Dorsolateral prefrontal cortex (tissue), 120 donors: ENCODE measurements at regions of chr10 and their contacts with region 1.

Region 1: DNA sequence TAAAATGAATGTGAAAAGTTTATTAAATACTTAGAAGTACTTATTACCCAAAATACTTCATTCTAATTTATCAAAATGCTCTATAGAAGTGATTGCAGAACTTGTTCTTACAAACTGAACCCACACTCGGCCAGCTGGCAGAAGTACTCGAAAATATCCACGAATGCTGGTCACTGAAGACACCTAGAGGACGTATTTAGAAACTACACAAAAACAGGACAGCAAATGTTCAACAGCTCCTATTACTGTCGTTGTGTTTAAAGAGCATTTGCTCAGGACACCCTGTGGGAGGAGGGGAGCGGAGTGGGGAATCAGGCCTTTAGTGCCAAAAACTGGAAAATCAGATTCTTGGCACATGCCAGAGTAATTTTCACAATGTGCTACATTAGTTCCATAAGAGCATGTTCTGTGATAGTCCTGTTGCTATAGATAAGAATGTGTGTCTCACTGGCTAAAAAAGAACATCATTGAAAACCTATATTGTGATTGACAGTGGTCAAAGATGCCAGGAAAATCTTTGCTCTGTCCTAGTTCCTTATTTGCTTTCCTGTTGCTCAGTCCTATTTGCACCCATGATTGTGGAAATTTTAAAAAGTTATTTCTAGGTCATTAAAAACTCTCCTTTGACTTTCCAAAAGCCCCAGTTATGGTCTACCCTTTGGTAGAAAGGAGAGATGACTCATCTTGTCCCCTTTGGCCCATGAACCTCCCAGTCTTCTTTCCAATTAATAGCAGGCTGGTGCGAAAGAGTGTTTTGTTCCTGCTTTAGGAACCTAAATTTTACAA is 49.0 kb upstream of the NRBF2 start:
- DNase-seq: peak in 7 of 10 donors; percentile 6 to 77 (median 55)
- H3K4me3 ChIP-seq: no peak overlapping the region
- H3K27ac ChIP-seq: no peak overlapping the region
- H3K27me3 ChIP-seq: no peaks in the 10 kb centered on the region
- CTCF ChIP-seq: peak; percentile 22 to 93 (median 78)

Region 2: DNA sequence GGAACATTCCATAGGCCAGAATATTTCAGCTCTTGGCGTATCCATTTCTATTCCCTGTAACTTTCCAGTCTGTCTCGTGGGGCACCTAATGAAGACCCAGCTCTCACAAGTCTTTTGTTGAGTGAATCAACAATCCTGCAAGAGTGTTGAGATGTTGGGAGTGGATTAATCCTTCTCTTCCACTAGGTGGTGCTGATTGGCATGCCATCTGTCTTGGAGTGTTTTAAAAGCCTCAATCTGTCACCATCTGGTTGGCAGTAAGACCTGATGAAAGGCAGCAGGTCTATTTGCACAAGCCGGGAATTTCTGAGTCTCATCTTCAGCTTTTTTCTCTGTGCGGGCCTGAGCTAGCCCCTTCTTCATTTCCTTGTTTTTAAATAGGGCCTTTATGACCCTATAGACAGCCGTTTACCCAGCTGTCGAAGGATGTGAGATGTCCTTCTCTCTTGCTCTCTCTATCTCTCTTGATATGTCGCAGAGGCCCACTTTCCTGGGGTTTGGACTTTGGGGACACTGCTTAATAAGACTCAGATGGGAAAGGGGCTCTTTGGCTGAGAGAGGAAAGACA is 529.4 kb before region 1 on chr10:
- intact Hi-C with region 1: loop called in 1 of 2 experiments (anchors 10 kb)
- DNase-seq: no peak
- H3K4me3 ChIP-seq: no peak overlapping the region
- H3K27ac ChIP-seq: no peak overlapping the region
- H3K27me3 ChIP-seq: no peaks in the 10 kb centered on the region
- CTCF ChIP-seq: peak; percentile 28 to 75 (median 57)

Region 3: GRCh38 chr10:62594093-62594520 is 490.0 kb before region 1 on chr10:
- intact Hi-C with region 1: loop called in 1 of 2 experiments (anchors 10 kb)
- DNase-seq: peak in 9 of 10 donors; percentile 19 to 76 (median 46)
- H3K4me3 ChIP-seq: no peak overlapping the region
- H3K27ac ChIP-seq: no peak overlapping the region
- H3K27me3 ChIP-seq: no peaks in the 10 kb centered on the region
- CTCF ChIP-seq: peak; percentile 52 to 96 (median 85)

Region 4: DNA sequence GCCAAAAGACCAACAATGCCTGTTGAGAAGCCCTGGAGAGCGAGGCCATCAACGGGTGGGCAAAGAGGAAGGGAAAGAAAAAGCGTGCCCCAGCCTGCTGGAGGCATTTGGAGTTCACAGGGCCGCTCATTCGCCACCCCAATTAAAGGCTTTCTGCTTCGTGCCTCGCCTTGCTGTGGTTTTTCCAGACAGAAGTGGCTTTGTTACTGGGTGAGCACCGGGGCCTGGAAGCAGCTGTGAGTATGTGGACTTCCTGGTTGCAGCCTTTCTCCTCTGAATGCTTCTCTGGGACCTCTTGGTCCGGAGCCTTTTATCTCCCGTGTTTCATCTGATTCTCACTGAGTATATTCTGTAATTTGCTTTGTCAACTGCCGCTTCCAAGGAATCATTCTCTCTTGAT is 149.8 kb before region 1 on chr10:
- intact Hi-C with region 1: no loop called
- DNase-seq: peak in 2 of 10 donors; percentile 17 to 35
- H3K4me3 ChIP-seq: peak overlapping the region in 6 of 59 donors; percentile 9 to 35 (median 20)
- H3K27ac ChIP-seq: no peak overlapping the region
- H3K27me3 ChIP-seq: no peaks in the 10 kb centered on the region
- CTCF ChIP-seq: no peak

Region 5: GRCh38 chr10:63376560-63377304 is 292.6 kb after region 1 on chr10:
- intact Hi-C with region 1: no loop called
- DNase-seq: no peak
- H3K4me3 ChIP-seq: no peak overlapping the region
- H3K27ac ChIP-seq: no peak overlapping the region
- H3K27me3 ChIP-seq: no peaks in the 10 kb centered on the region
- CTCF ChIP-seq: no peak